ENCODE measurements at regions of chr22 and their contacts with region 1.

Region 1: DNA sequence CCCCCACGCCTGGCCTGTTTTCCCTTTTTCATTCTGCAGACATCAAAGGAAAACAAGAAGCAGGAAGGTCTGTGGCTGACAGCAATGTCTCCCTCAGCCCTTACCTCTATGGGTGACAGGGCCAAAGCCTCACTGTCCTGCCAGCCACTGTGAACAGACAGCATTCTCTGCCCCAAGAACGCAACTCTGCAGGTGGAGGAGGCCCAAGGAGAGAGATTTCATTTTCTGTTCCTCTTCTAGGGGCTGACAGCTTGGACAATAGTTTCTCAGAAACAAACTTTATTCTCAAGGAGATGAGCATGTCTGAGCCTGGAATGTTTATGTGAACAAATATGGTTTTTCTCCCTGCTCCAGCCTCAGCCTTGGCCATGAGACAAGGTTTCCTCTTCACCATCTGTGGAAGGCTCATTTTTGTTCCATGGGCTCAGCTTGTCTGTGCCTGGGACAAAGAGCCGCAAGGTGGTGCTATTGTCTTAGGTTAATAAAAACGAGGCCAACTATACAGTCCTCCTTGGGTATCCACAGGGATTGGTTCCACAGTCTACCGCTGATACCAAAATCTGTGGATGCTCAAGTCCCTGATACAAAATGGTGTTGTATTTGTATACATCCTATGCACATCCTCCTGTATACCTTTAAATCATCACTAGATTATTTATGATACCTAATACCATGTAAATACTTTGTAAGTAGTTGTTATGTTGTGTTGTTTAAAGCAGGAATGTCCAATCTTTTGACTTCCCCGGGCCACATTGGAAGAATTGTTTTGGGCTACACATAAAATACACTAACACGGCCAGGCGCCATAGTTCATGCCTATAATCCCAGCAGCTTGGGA is 5.8 kb downstream of the PIWIL3 start:
- DNase-seq: peak; percentile 54
- ATAC-seq: peak; percentile 86
- H3K4me3 ChIP-seq: no peak overlapping the region
- H3K27ac ChIP-seq: no peak overlapping the region
- H3K4me1 ChIP-seq: no peaks in the 10 kb centered on the region
- H3K27me3 ChIP-seq: no peaks in the 10 kb centered on the region
- CTCF ChIP-seq: peak; percentile 66 to 85 (median 84); a peak in 5 of 6 replicates
- POLR2A ChIP-seq: no peak
- RAD21 ChIP-seq: peak; percentile 78

Region 2: DNA sequence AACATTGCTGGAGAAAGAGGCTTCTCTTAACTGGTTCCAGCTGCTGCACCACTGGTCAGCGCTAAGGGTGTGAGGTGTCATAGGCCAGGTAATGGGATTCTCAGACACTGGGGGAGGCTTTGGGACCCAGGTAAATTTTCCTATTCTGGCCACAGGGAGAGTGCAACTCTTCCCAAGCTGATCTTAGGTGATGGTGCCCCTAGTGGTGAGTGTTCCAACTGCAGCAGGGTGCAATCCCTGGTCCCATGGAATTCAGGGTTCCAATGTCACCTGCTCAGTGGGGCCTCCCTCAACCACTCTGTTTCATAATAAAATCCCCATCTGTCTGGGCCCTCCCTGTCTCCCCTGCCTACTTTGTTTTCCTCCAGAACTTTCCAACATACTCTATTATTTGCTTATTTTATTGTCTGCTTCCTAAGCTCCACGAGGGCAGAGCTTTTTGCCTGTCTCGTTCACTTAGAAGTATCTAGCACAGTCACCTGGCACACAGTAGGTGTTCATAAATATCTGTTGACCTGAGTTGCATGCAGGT is 34.3 kb after region 1 on chr22:
- CTCF ChIA-PET with region 1: interaction called, 12 read pairs
- POLR2A ChIA-PET with region 1: no interaction called
- RAD21 ChIA-PET with region 1: no interaction called
- intact Hi-C with region 1: no loop called
- DNase-seq: peak; percentile 70
- ATAC-seq: peak; percentile 63
- H3K4me3 ChIP-seq: no peak overlapping the region
- H3K27ac ChIP-seq: no peak overlapping the region
- H3K4me1 ChIP-seq: peaks cover 3 to 16% of the 10 kb centered on the region in 2 experiments; a peak in 3 of 4 replicates
- H3K27me3 ChIP-seq: no peaks in the 10 kb centered on the region
- CTCF ChIP-seq: peak; percentile 90 to 98 (median 94)
- POLR2A ChIP-seq: no peak
- RAD21 ChIP-seq: peak; percentile 36

Region 3: GRCh38 chr22:24834845-24835570 is 66.3 kb after region 1 on chr22:
- CTCF ChIA-PET with region 1: interaction called, 4 read pairs
- POLR2A ChIA-PET with region 1: no interaction called
- RAD21 ChIA-PET with region 1: interaction called in 1 of 2 experiments, 3 read pairs
- intact Hi-C with region 1: loop called (anchors 2 kb)
- DNase-seq: peak; percentile 37
- ATAC-seq: peak; percentile 98
- H3K4me3 ChIP-seq: no peak overlapping the region
- H3K27ac ChIP-seq: no peak overlapping the region
- H3K4me1 ChIP-seq: no peaks in the 10 kb centered on the region
- H3K27me3 ChIP-seq: no peaks in the 10 kb centered on the region
- CTCF ChIP-seq: peak; percentile 38 to 64 (median 60); a peak in 5 of 6 replicates
- POLR2A ChIP-seq: no peak
- RAD21 ChIP-seq: peak; percentile 48

Region 4: GRCh38 chr22:24845041-24845898 is 76.5 kb after region 1 on chr22:
- CTCF ChIA-PET with region 1: interaction called, 28 read pairs
- POLR2A ChIA-PET with region 1: no interaction called
- RAD21 ChIA-PET with region 1: interaction called in 1 of 2 experiments, 3 read pairs
- intact Hi-C with region 1: loop called (anchors 1 kb)
- DNase-seq: no peak
- ATAC-seq: no peak
- H3K4me3 ChIP-seq: no peak overlapping the region
- H3K27ac ChIP-seq: no peak overlapping the region
- H3K4me1 ChIP-seq: no peaks in the 10 kb centered on the region
- H3K27me3 ChIP-seq: no peaks in the 10 kb centered on the region
- CTCF ChIP-seq: no peak
- POLR2A ChIP-seq: no peak
- RAD21 ChIP-seq: no peak

Region 5: GRCh38 chr22:24938741-24939341 is 170.1 kb after region 1 on chr22:
- CTCF ChIA-PET with region 1: interaction called, 6 read pairs
- POLR2A ChIA-PET with region 1: no interaction called
- RAD21 ChIA-PET with region 1: no interaction called
- intact Hi-C with region 1: loop called (anchors 5 kb)
- DNase-seq: no peak
- ATAC-seq: peak; percentile 87
- H3K4me3 ChIP-seq: no peak overlapping the region
- H3K27ac ChIP-seq: no peak overlapping the region
- H3K4me1 ChIP-seq: no peaks in the 10 kb centered on the region; a peak in 1 of 4 replicates
- H3K27me3 ChIP-seq: no peaks in the 10 kb centered on the region
- CTCF ChIP-seq: peak; percentile 65 to 78 (median 76); a peak in 5 of 6 replicates
- POLR2A ChIP-seq: no peak
- RAD21 ChIP-seq: peak; percentile 80

Region 6: DNA sequence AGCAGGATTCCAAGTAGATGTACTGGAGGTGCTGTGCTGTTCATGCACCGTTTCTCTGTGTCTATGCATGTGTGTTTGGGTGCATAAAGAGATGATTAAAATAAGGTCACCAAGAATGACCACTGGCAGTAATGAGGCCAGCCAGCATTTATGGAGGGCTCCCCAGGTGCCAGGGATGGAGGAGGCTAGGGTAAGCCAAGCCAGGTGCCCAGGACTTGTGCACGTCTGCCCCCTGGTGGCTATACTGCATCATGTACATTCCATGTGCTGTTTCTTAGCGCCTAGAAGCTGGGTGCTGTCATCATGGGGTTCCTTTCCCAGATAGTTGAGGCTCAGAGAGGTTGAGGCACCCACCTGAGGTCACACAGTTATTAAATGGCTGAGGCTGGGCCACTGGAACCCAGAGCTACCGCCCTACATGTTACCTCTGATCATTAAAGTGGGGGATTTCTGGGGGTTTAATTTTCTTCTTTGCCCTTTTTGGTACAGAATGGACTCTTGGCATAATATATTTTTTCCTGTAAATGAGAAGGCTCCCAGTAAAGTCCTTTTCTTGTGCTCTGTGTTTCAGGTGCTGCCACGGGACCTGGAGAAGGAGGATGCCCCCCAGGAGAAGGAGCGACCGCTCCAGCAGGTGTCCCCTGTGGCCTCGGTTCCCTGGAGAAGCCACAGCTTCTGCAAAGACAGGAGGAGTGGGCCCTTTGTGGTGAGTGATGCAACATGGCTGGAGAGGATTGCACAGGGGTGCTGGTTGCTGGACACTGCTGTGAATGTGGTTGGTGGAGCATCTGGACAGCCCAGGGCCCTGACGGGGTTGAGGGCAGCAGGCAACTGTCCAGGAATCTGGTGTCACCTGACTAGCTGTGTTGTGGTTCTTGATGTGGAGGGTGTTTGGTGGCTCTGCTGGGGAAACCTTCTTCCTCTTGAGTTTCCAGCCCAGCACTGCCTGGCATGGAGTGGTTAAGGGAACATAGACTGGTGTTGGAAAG is 280.2 kb after region 1 on chr22:
- CTCF ChIA-PET with region 1: interaction called, 6 read pairs
- POLR2A ChIA-PET with region 1: no interaction called
- RAD21 ChIA-PET with region 1: no interaction called
- intact Hi-C with region 1: loop called (anchors 2 kb)
- DNase-seq: peak; percentile 46
- ATAC-seq: peak; percentile 95
- H3K4me3 ChIP-seq: no peak overlapping the region
- H3K27ac ChIP-seq: no peak overlapping the region
- H3K4me1 ChIP-seq: peaks cover 0 to 17% of the 10 kb centered on the region in 2 experiments; a peak in 2 of 4 replicates
- H3K27me3 ChIP-seq: no peaks in the 10 kb centered on the region
- CTCF ChIP-seq: peak; percentile 80 to 90 (median 88)
- POLR2A ChIP-seq: no peak
- RAD21 ChIP-seq: peak; percentile 95

Region 7: DNA sequence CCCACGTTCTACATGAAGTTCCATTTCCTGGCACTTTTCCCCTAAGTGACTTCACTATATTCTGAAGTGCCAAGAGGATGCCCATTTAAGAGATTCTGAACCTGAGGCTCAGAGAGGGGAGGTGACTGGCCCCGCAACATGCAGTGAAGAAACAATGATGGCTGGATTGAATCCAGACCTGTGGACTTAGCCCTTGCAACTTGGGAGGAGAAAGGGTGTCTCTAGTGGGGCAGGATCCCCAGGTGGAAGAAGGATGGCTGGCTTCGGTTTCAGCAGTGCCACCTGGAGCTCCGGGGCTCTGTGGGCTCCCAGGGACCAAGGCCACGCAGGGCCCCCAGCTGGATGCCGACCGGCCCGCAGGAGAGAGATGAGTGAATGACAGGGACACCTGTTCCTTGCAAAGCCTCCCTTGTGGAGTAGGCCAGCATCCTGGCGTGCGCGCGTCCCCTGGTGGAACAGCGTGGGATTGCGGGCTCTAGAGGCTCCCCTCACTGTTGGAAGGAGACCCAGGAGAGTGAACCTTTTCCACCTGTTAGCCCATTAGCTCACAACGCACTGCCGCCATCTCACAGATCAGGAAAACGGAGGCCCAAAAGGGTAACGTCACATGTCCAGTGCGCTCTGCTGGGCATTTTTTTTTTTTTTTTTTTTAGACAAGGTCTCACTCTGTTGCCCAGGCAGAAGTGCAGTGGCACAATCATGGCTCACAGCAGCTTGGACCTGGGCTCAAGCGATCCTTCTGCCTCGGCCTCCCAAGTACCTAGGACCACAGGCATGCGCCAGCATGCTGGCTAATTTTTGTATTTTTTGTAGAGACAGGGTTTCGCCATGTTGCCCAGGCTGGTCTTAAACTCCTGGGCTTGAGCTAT is 288.5 kb after region 1 on chr22:
- CTCF ChIA-PET with region 1: interaction called, 4 read pairs
- POLR2A ChIA-PET with region 1: no interaction called
- RAD21 ChIA-PET with region 1: no interaction called
- intact Hi-C with region 1: loop called (anchors 2 kb)
- DNase-seq: peak; percentile 29
- ATAC-seq: peak; percentile 96
- H3K4me3 ChIP-seq: no peak overlapping the region
- H3K27ac ChIP-seq: no peak overlapping the region
- H3K4me1 ChIP-seq: peaks cover 2 to 30% of the 10 kb centered on the region in 2 experiments; a peak in 3 of 4 replicates
- H3K27me3 ChIP-seq: no peaks in the 10 kb centered on the region
- CTCF ChIP-seq: peak; percentile 65 to 97 (median 88); a peak in 5 of 6 replicates
- POLR2A ChIP-seq: no peak
- RAD21 ChIP-seq: peak; percentile 74